ENCODE measurements at regions of chr19 and their contacts with region 1.

Region 1: GRCh38 chr19:49937750-49938381 is 8.6 kb upstream of the NUP62 start:
- DNase-seq: peak; percentile 82 to 92 (median 86)
- H3K4me3 ChIP-seq: no peak overlapping the region
- H3K27ac ChIP-seq: no peak overlapping the region
- H3K4me1 ChIP-seq: peaks cover 0 to 3% (median 0%) of the 10 kb centered on the region in 3 donors
- H3K27me3 ChIP-seq: no peaks in the 10 kb centered on the region
- CTCF ChIP-seq: peak; percentile 95

Region 2: DNA sequence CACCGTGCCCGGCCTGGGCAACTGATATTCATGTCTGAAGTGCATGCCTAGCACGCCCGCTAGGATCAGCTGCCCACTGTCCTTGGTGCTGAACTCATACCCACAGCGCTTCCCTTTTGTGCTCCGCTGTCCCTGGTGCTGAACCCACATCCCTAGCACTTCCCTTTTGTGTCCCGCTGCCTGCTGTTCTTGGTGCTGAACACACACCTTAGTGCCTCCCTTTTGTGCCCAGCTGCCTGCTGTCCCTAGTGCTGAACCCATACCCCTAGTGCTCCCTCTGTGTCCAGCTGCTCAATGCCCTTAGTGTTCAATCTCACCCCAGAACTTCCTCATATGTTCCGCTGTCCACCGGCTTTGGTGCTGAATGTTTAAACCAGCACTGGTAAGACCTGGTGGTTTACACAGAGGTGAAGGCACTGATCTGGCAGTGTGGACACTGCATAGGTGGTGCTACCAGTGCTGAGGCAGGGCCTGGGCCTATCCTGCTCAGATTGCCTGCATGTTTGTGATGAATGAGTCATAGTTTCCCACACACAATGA is 49.4 kb after region 1 on chr19:
- intact Hi-C with region 1: loop called (anchors 5 kb)
- DNase-seq: peak; percentile 92 to 99 (median 98)
- H3K4me3 ChIP-seq: no peak overlapping the region
- H3K27ac ChIP-seq: no peak overlapping the region
- H3K4me1 ChIP-seq: no peaks in the 10 kb centered on the region
- H3K27me3 ChIP-seq: no peaks in the 10 kb centered on the region
- CTCF ChIP-seq: peak; percentile 18

Region 3: GRCh38 chr19:50198429-50199258 is 260.8 kb after region 1 on chr19:
- intact Hi-C with region 1: no loop called
- DNase-seq: no peak
- H3K4me3 ChIP-seq: no peak overlapping the region
- H3K27ac ChIP-seq: no peak overlapping the region
- H3K4me1 ChIP-seq: peaks cover 0 to 15% (median 0%) of the 10 kb centered on the region in 3 donors
- H3K27me3 ChIP-seq: no peaks in the 10 kb centered on the region
- CTCF ChIP-seq: no peak